ENCODE measurements at regions of chr7 and their contacts with region 1.

Region 1: GRCh38 chr7:156640257-156640948 is at the start of gene RNF32:
- DNase-seq: peak; percentile 99
- H3K4me3 Mint-ChIP-seq: peak within 1 kb of the TSS; percentile 88
- H3K27ac Mint-ChIP-seq: peak within 1 kb of the TSS; percentile 96
- H3K4me1 Mint-ChIP-seq: peaks cover 45% of the 10 kb centered on the region
- H3K27me3 Mint-ChIP-seq: peaks cover 5% of the 10 kb centered on the region
- total RNA-seq, gene RNF32: 3.4 to 4.1 TPM

Region 2: DNA sequence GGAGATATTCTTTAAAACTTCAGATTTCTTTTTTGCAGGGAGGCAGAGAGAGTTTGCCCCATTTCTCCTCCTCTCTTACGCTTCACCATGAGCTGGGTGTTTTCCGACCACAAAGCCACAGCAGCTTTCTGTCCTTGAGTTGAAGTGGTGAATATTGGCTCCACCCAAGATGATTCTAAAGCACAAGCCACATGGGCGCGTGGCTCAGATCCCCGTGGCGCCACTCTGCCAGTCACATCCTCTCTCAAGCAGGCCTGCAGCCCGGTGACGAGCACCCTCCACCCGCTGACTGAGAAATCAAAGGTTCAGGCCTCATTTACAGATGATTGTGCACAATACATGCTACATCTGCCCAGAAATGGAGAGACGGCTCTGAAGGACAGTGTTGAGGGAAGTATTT is 27.5 kb before region 1 on chr7:
- CTCF ChIA-PET with region 1: interaction called, 10 read pairs
- POLR2A ChIA-PET with region 1: interaction called, 32 read pairs
- DNase-seq: peak; percentile 93
- H3K4me3 Mint-ChIP-seq: peak overlapping the region; percentile 3
- H3K27ac Mint-ChIP-seq: peak overlapping the region; percentile 53
- H3K4me1 Mint-ChIP-seq: peaks cover 47% of the 10 kb centered on the region
- H3K27me3 Mint-ChIP-seq: peaks cover 62% of the 10 kb centered on the region

Region 3: GRCh38 chr7:156625580-156625979 is 14.8 kb before region 1 on chr7:
- CTCF ChIA-PET with region 1: interaction called, 4 read pairs
- POLR2A ChIA-PET with region 1: interaction called, 14 read pairs
- DNase-seq: peak; percentile 46
- H3K4me3 Mint-ChIP-seq: peak overlapping the region; percentile 22
- H3K27ac Mint-ChIP-seq: peak overlapping the region; percentile 72
- H3K4me1 Mint-ChIP-seq: peaks cover 20% of the 10 kb centered on the region
- H3K27me3 Mint-ChIP-seq: peaks cover 29% of the 10 kb centered on the region

Region 4: DNA sequence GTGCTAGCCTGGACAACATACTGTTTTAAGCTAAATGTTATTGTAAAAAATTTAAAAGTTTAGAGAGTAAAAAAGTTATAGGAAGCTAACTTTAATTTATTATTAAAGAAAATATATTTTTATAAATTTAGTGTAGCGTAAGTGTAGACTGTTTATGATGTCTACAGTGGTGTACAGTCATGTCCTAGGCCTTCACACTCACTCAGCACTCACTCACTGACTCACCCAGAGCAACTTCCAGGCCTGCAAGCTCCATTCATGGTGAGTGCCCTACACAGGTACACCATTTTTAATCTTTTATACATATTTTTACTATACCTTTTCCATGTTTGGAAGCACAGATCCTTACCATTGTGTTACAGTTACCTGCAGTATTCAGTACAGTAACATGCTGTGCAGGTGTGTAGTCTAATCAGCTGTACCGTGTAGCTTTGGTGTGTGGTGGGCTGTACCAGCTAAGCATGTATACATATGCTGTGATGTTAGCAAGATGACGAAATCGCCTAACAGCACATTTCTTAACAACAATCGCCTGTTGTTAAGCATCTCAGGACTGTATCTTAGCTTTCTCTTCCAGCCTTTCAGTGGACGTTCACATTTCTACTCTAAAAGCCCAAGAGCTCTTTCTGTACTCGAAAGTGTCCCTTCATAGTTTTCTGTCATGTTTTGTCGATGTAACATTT is 12.6 kb after region 1 on chr7:
- CTCF ChIA-PET with region 1: interaction called, 10 read pairs
- POLR2A ChIA-PET with region 1: interaction called, 13 read pairs
- DNase-seq: no peak
- H3K4me3 Mint-ChIP-seq: no peak overlapping the region
- H3K27ac Mint-ChIP-seq: no peak overlapping the region
- H3K4me1 Mint-ChIP-seq: peaks cover 4% of the 10 kb centered on the region
- H3K27me3 Mint-ChIP-seq: peaks cover 18% of the 10 kb centered on the region

Region 5: GRCh38 chr7:156668181-156668624 is 27.8 kb after region 1 on chr7:
- CTCF ChIA-PET with region 1: no interaction called
- POLR2A ChIA-PET with region 1: no interaction called
- DNase-seq: no peak
- H3K4me3 Mint-ChIP-seq: no peak overlapping the region
- H3K27ac Mint-ChIP-seq: no peak overlapping the region
- H3K4me1 Mint-ChIP-seq: no peaks in the 10 kb centered on the region
- H3K27me3 Mint-ChIP-seq: no peaks in the 10 kb centered on the region